Activated CD8-positive, alpha-beta T cell treated with anti-CD3 and anti-CD28 coated beads for 36 hours (primary cell): ENCODE measurements at regions of chr10 and their contacts with region 1.

Region 1: DNA sequence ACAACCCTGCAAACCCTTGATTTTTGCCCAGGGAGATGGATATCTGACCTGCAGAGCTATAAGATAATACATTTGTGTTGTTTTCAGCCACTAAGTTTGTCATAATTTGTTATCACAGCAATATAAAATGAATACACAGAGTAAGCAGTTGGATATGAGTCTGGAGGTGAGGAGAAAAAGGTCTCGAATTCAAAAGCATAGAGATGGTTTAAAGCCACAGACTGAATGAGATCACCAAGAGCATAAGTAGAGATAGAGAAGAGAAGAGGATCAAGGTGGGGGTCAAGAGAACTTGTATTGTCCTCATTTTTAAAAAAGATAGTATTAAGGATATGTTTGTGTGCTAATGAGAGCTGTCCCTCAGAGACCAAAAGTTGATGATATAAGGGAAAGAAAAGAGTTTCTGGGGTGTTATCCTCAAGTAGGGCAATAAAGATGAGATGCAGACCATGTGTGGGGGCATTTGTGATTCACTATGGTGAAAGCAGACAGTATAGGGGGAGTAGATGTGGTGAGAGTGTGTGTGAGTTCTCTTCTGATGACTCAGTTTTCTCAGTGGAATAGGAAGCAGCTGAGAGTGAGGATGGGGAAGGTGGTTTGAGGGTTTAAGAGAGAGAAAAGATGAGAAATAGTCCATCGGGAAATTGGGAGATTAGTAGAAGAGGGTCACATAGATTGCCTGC is 25.8 kb upstream of the PCGF5 start:
- DNase-seq: peak; percentile 60
- ATAC-seq: peak; percentile 83
- H3K4me3 Mint-ChIP-seq: no peak overlapping the region
- H3K27ac Mint-ChIP-seq: peak overlapping the region; percentile 69
- H3K4me1 Mint-ChIP-seq: peaks cover 85% of the 10 kb centered on the region
- H3K27me3 Mint-ChIP-seq: no peaks in the 10 kb centered on the region
- CTCF ChIP-seq: no peak

Region 2: DNA sequence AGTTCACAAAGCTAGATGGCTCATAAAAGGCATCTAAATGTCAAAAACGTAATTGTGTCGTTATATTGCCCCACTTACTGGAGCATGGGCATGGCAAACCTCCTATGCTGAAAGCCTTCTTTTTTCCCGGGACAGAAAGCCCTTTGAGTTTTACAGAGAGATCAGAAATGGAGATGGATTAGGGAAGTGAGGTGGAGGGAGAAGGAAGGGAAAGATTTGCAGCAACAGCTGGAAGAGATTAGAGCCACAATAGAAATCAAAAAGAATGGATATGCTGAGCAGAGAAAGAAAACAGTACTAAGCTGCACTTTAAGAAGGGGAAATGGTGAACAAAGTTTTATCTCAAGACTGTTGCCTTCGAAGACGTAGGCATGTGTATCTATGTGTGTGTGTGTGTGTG is 71.4 kb before region 1 on chr10:
- CTCF ChIA-PET with region 1: no interaction called
- POLR2A ChIA-PET with region 1: no interaction called
- intact Hi-C with region 1: no loop called
- DNase-seq: no peak
- ATAC-seq: no peak
- H3K4me3 Mint-ChIP-seq: no peak overlapping the region
- H3K27ac Mint-ChIP-seq: no peak overlapping the region
- H3K4me1 Mint-ChIP-seq: peaks cover 9% of the 10 kb centered on the region
- H3K27me3 Mint-ChIP-seq: peaks cover 3% of the 10 kb centered on the region
- CTCF ChIP-seq: no peak

Region 3: GRCh38 chr10:91163269-91163868 is 31.3 kb before region 1 on chr10:
- CTCF ChIA-PET with region 1: interaction called, 3 read pairs
- POLR2A ChIA-PET with region 1: interaction called, 17 read pairs
- intact Hi-C with region 1: no loop called
- DNase-seq: peak; percentile 84
- ATAC-seq: peak; percentile 67
- H3K4me3 Mint-ChIP-seq: peak overlapping the region; percentile 82
- H3K27ac Mint-ChIP-seq: peak overlapping the region; percentile 93
- H3K4me1 Mint-ChIP-seq: peaks cover 46% of the 10 kb centered on the region
- H3K27me3 Mint-ChIP-seq: no peaks in the 10 kb centered on the region
- CTCF ChIP-seq: no peak

Region 4: DNA sequence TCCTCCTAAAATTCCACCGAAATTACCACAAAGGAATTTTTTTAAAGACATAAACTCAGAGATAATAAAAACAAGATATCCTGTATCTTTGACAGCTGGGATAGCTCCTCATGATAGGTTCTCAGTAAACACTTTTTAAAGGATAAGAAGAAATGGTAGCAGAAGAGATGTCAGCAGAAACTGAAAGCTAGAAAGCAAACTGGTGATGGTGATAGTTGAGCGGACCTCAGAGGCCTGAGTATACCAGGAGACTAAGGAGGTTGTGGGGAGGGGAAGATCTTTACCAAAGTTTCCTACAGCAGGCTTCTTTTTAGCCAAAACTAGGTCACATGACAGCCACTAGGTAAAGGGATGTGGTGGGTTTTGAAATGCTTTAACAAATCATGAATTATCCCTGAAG is 48.3 kb after region 1 on chr10:
- CTCF ChIA-PET with region 1: no interaction called
- POLR2A ChIA-PET with region 1: no interaction called
- intact Hi-C with region 1: loop called (anchors 2 kb)
- DNase-seq: peak; percentile 11
- ATAC-seq: peak; percentile 65
- H3K4me3 Mint-ChIP-seq: no peak overlapping the region
- H3K27ac Mint-ChIP-seq: peak overlapping the region; percentile 44
- H3K4me1 Mint-ChIP-seq: peaks cover 17% of the 10 kb centered on the region
- H3K27me3 Mint-ChIP-seq: no peaks in the 10 kb centered on the region
- CTCF ChIP-seq: no peak